ENCODE measurements at regions of chr1 and their contacts with region 1.

Region 1: GRCh38 chr1:166489670-166490436 is 323.1 kb upstream of the FAM78B start:
- DNase-seq: peak; percentile 68
- H3K4me3 Mint-ChIP-seq: no peak overlapping the region
- H3K27ac Mint-ChIP-seq: no peak overlapping the region
- H3K4me1 Mint-ChIP-seq: peaks cover 14% of the 10 kb centered on the region
- H3K27me3 Mint-ChIP-seq: no peaks in the 10 kb centered on the region

Region 2: GRCh38 chr1:165697881-165698760 is 791.7 kb before region 1 on chr1 and contains the start of gene ALDH9A1:
- CTCF ChIA-PET with region 1: no interaction called
- intact Hi-C with region 1: loop called (anchors 5 kb)
- DNase-seq: peak; percentile 89
- H3K4me3 Mint-ChIP-seq: peak within 1 kb of the TSS; percentile 97
- H3K27ac Mint-ChIP-seq: peak within 1 kb of the TSS; percentile 96
- H3K4me1 Mint-ChIP-seq: peaks cover 26% of the 10 kb centered on the region
- H3K27me3 Mint-ChIP-seq: no peaks in the 10 kb centered on the region
- total RNA-seq, gene ALDH9A1: 35.8 to 43.5 TPM

Region 3: GRCh38 chr1:166479052-166479631 is 10.7 kb before region 1 on chr1:
- CTCF ChIA-PET with region 1: interaction called, 18 read pairs
- intact Hi-C with region 1: no loop called
- DNase-seq: peak; percentile 81
- H3K4me3 Mint-ChIP-seq: no peak overlapping the region
- H3K27ac Mint-ChIP-seq: no peak overlapping the region
- H3K4me1 Mint-ChIP-seq: no peaks in the 10 kb centered on the region
- H3K27me3 Mint-ChIP-seq: no peaks in the 10 kb centered on the region

Region 4: GRCh38 chr1:166838766-166839599 is 349.1 kb after region 1 on chr1 and contains the start of gene POGK:
- CTCF ChIA-PET with region 1: no interaction called
- intact Hi-C with region 1: loop called (anchors 1 kb)
- DNase-seq: peak; percentile 91
- H3K4me3 Mint-ChIP-seq: peak within 1 kb of the TSS; percentile 95
- H3K27ac Mint-ChIP-seq: peak within 1 kb of the TSS; percentile 96
- H3K4me1 Mint-ChIP-seq: peaks cover 46% of the 10 kb centered on the region
- H3K27me3 Mint-ChIP-seq: no peaks in the 10 kb centered on the region
- total RNA-seq, gene POGK: 33.1 to 34.9 TPM

Region 5: GRCh38 chr1:166910396-166910994 is 420.6 kb after region 1 on chr1:
- CTCF ChIA-PET with region 1: no interaction called
- intact Hi-C with region 1: loop called (anchors 1 kb)
- DNase-seq: peak; percentile 90
- H3K4me3 Mint-ChIP-seq: no peak overlapping the region
- H3K27ac Mint-ChIP-seq: no peak overlapping the region
- H3K4me1 Mint-ChIP-seq: peaks cover 5% of the 10 kb centered on the region
- H3K27me3 Mint-ChIP-seq: no peaks in the 10 kb centered on the region